Spleen (tissue), 13 donors: ENCODE measurements at regions of chr17 and their contacts with region 1.

Region 1: DNA sequence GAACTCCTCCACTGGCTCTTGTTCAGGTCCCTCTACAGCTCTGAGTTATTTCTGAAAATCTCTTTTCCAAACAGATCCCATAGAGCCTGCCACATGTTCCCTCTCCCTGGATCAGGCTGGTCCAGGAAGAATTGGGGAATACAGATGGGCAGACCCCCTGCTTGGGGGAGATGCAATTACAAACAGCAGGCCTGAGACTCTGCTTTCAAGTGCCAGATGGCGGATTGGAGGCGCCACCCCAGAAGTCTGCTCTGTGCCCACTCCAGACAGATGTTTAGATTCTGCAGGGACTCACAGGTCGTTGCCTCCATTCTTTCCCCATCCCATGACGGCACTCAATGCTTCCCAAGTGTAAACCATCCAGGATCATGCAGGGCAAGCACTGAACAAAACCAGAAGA is 316.6 kb downstream of the SLC39A11 start:
- DNase-seq: no peak
- H3K4me3 ChIP-seq: no peak overlapping the region
- H3K27ac ChIP-seq: no peak overlapping the region
- H3K4me1 ChIP-seq: no peaks in the 10 kb centered on the region
- H3K27me3 ChIP-seq: no peaks in the 10 kb centered on the region
- CTCF ChIP-seq: no peak
- POLR2A ChIP-seq: no peak

Region 2: DNA sequence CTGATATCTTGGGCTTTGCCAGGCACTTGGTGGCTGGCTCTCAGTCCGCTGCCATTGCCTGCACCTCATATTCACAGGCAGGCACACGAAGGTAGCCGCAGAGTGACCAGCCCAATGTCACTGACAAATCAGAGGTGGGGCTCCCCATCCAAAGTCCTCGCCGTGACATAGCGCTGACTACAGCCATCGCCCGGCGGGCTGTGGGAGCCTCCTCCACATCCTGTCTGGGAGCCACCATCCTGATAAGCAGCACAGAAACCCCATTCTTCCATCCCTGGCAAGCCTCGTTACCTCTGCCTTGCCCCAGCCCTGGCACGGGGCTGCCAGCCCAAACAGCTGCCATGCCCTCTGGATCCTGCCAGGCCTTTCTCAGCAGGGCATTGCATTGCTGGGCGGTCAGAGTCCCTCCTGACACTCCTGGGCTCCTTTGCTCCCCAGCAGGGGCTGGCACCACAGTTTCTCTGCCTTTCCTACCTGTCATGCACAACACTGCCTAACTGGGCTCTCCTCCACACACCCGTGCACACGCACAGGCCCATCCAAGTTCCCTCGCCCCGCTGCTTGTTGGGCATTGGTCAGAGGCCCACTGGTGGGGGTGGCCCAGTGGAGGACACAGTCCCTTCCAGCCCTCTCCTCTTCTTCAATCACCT is 121.1 kb before region 1 on chr17:
- intact Hi-C with region 1: no loop called
- DNase-seq: no peak
- H3K4me3 ChIP-seq: no peak overlapping the region
- H3K27ac ChIP-seq: no peak overlapping the region
- H3K4me1 ChIP-seq: no peaks in the 10 kb centered on the region
- H3K27me3 ChIP-seq: no peaks in the 10 kb centered on the region
- CTCF ChIP-seq: no peak
- POLR2A ChIP-seq: no peak

Region 3: DNA sequence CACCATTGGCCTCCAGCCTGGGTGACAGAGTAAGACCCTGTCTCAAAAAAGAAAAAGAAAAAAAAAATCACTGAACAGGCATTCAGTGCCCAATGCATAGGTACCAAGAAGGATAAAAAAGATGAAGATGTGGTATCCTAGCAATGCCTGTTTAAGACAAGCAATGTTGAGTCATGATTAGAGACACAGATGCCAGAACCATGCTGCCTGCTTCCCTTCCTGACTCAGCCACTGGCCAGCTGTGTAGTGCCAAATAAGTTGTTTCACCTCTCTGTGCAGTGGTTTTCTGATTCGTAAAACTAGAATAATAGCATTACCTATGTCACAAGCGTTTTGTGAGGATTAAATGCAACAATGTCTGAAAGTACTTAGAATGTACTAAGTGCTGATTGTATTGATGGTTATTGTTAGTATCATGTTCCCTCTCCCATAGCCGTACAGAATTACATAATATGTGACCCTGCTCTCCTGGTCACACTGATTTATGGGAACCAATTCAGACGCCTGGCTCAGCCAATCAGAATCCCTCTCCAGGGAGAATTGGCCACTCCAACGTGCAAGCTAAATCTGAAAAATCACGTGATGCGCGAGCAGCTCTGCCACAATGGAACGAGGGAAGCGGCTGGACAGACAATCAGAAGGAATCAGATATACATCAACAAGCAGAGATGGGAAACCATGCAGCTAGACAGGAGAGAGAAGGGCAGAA is 74.6 kb after region 1 on chr17:
- intact Hi-C with region 1: loop called (anchors 10 kb)
- DNase-seq: no peak
- H3K4me3 ChIP-seq: no peak overlapping the region
- H3K27ac ChIP-seq: no peak overlapping the region
- H3K4me1 ChIP-seq: no peaks in the 10 kb centered on the region
- H3K27me3 ChIP-seq: no peaks in the 10 kb centered on the region
- CTCF ChIP-seq: no peak
- POLR2A ChIP-seq: no peak